ENCODE measurements at regions of chr3 and their contacts with region 1.

Region 1: DNA sequence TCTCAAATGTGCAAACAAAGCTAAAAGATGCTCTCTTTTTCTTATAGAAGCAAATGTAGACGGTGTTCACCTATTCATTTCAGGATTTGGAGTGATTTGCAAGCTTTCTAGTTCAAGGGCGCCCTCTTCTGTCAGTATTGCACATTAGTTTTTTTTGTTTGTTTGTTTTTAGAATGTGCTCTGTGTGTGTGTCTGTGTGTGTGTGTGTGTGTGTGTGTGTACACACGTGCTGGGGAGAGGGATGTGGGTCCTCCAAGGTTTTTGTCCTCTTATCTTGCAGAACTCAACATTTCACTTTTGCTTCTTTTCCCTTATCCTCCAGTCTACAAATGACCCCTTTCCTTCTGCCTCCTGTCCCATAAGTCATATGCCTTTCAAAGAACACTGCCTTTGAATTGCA is 23.5 kb downstream of the DNAH1 start:
- DNase-seq: peak; percentile 34
- ATAC-seq: peak; percentile 83
- H3K4me3 ChIP-seq: no peak overlapping the region
- H3K27ac ChIP-seq: no peak overlapping the region
- H3K4me1 ChIP-seq: peaks cover 7% of the 10 kb centered on the region; the same call in 1 of the 2 replicates
- H3K27me3 ChIP-seq: no peaks in the 10 kb centered on the region
- CTCF ChIP-seq: peak; percentile 60 to 77 (median 62)
- EP300 ChIP-seq: no peak
- POLR2A ChIP-seq: no peak
- RAD21 ChIP-seq: peak; percentile 99

Region 2: DNA sequence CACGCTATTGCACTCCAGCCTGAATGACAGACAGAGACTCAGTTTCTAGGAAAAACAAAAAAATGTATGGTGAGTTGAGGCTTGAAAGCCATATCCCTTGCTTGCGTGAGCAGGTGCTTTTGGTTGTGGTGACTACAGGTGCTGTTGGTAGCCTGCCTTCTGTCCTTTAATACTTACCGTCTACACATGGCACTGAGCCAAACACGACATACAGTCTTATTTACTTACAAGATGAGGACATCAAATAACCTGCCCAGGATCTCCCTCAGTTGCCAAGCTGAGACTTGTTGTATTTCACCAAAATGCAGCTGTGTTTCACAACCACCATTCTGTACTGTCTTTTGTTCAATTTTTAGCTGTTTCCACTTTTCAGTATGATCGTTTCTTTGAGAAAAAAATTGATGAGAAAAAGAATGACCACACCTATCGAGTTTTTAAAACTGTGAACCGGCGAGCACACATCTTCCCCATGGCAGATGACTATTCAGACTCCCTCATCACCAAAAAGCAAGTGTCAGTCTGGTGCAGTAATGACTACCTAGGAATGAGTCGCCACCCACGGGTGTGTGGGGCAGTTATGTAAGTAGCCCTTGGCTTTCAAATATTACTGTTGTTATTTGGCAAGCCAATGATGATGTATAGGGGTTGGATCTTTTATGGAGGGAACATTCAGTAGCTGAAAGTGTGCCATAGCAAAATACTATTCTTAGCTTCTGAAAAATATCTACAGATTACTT is 135.1 kb before region 1 on chr3:
- CTCF ChIA-PET with region 1: interaction called, 10 read pairs
- POLR2A ChIA-PET with region 1: no interaction called
- RAD21 ChIA-PET with region 1: no interaction called
- SMC1A ChIA-PET with region 1: interaction called, 4 read pairs
- in situ Hi-C with region 1: no loop called
- intact Hi-C with region 1: no loop called
- DNase-seq: no peak
- ATAC-seq: peak; percentile 16; the same call in 1 of the 3 replicates
- H3K4me3 ChIP-seq: peak overlapping the region; percentile 3; the same call in 1 of the 2 replicates
- H3K27ac ChIP-seq: no peak overlapping the region
- H3K4me1 ChIP-seq: peaks cover 21% of the 10 kb centered on the region; the same call in 1 of the 2 replicates
- H3K27me3 ChIP-seq: no peaks in the 10 kb centered on the region
- CTCF ChIP-seq: no peak
- EP300 ChIP-seq: no peak
- POLR2A ChIP-seq: no peak
- RAD21 ChIP-seq: no peak

Region 3: DNA sequence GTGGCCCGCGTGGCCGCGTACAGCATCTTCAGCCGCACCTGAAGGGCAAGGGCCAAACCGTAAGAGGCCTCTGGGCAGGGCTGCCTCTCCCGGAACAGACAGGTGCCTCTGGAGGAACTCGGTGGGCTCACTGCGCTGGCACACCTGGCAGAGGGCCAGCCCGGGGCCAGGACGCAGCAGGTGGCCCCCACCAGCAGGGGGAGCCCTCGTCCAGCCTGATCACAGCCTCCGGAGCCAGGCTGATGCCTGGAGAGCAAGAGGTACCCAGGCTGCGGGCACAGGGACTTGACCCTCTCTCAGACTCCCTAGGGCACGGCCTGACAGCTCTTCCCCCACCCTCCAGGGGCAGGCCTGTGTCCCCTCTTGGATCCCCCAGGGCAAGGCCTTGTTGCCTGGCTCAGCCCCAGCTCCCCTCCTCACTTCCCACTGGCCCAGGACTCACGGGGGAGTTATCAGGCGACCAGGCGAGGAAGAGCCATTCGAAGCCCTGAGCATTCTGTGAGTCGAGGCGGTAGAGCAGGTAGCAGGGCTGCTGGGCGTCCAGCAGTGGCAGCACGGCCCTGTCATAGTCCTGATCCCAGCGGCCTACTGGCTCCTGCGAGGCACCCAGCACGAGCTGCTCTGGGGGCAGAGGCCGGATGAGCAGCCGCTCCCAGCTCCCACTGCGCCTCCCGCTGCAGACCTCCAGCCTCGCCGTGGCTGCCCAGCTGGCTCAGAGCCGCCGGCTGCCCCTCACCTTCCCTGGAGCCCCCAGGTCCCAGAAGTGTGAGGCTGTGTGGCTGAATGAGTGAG is 107.9 kb before region 1 on chr3:
- CTCF ChIA-PET with region 1: interaction called, 91 read pairs
- POLR2A ChIA-PET with region 1: interaction called, 7 read pairs
- RAD21 ChIA-PET with region 1: interaction called, 30 read pairs
- SMC1A ChIA-PET with region 1: interaction called, 36 read pairs
- in situ Hi-C with region 1: loop called (anchors 5 kb)
- intact Hi-C with region 1: no loop called
- DNase-seq: no peak
- ATAC-seq: peak; percentile 92
- H3K4me3 ChIP-seq: no peak overlapping the region
- H3K27ac ChIP-seq: no peak overlapping the region
- H3K4me1 ChIP-seq: peaks cover 9% of the 10 kb centered on the region
- H3K27me3 ChIP-seq: no peaks in the 10 kb centered on the region
- CTCF ChIP-seq: peak; percentile 92 to 98 (median 95)
- EP300 ChIP-seq: no peak
- POLR2A ChIP-seq: no peak
- RAD21 ChIP-seq: peak; percentile 78

Region 4: DNA sequence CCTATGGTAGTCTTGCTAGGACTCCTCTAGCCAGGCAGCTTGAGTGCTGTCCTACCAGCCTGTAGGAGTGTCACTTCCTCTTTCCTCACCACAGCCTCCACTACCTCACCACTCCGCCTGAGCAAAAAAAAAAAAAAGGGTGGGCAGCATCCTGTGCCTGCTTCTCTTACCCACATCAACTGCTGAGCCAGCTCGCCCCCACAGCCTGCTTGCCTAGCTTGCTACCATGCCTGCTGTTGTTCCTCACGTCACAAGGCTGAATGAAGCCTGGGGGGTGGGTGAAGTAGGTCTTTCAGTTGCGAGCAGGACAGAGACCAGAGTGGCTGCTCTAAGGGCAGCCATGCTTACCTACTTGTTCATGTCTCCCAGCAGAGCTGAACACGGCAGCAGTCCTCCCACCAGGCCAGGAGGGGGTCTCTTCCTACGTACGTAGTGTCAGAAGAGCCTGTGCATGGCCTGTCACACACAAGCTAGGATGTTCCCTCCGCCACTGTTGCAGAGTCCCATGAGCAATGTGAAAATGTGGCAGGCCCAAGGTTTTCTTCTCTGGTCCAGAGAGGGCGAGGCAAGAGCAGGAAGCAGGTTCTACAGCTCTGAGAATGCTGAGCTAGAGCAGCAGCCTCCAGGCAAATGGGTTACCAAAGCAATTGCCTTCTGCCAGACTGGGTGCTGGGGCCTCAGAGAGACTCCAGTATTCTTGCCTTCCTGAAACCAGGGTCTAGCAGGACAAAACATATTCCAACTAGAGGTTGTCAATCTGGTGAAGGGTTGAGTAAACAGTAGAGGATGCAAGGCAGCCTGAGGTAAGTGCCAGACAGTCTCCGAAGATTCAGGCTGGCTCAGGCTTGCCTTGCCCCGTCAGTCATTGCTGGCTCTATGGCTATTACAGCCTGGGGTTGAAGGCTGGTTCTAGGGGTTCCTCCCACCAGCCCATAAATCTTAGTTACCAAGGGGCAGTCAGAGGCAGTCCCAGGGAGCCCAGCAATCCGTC is 86.0 kb before region 1 on chr3:
- CTCF ChIA-PET with region 1: interaction called, 9 read pairs
- POLR2A ChIA-PET with region 1: interaction called, 3 read pairs
- RAD21 ChIA-PET with region 1: no interaction called
- SMC1A ChIA-PET with region 1: interaction called, 11 read pairs
- in situ Hi-C with region 1: no loop called
- intact Hi-C with region 1: no loop called
- DNase-seq: peak; percentile 85
- ATAC-seq: peak; percentile 98
- H3K4me3 ChIP-seq: no peak overlapping the region
- H3K27ac ChIP-seq: peak overlapping the region; percentile 88
- H3K4me1 ChIP-seq: peaks cover 18% of the 10 kb centered on the region
- H3K27me3 ChIP-seq: no peaks in the 10 kb centered on the region
- CTCF ChIP-seq: no peak
- EP300 ChIP-seq: peak; percentile 66 to 86; a peak in 3 of 4 replicates
- POLR2A ChIP-seq: peak; percentile 75
- RAD21 ChIP-seq: 0 out of 2 replicates have a peak, but pooled peaks have one; percentile 2

Region 5: GRCh38 chr3:52299879-52300611 is 39.6 kb before region 1 on chr3:
- CTCF ChIA-PET with region 1: interaction called, 451 read pairs
- POLR2A ChIA-PET with region 1: interaction called, 4 read pairs
- RAD21 ChIA-PET with region 1: interaction called, 52 read pairs
- SMC1A ChIA-PET with region 1: interaction called, 62 read pairs
- in situ Hi-C with region 1: no loop called
- intact Hi-C with region 1: no loop called
- DNase-seq: no peak
- ATAC-seq: peak; percentile 80
- H3K4me3 ChIP-seq: no peak overlapping the region
- H3K27ac ChIP-seq: 0 out of 2 replicates have a peak overlapping the region, but pooled peaks have one; percentile 24
- H3K4me1 ChIP-seq: peaks cover 12% of the 10 kb centered on the region
- H3K27me3 ChIP-seq: no peaks in the 10 kb centered on the region
- CTCF ChIP-seq: peak in 2 of 3 experiments; percentile 10 to 29; a peak in 3 of 6 replicates
- EP300 ChIP-seq: no peak
- POLR2A ChIP-seq: peak; percentile 65
- RAD21 ChIP-seq: no peak

Region 6: GRCh38 chr3:52328536-52329080 is 11.0 kb before region 1 on chr3:
- CTCF ChIA-PET with region 1: interaction called, 14 read pairs
- POLR2A ChIA-PET with region 1: interaction called, 3 read pairs
- RAD21 ChIA-PET with region 1: interaction called, 4 read pairs
- SMC1A ChIA-PET with region 1: interaction called, 26 read pairs
- in situ Hi-C with region 1: no loop called
- intact Hi-C with region 1: no loop called
- DNase-seq: no peak
- ATAC-seq: no peak
- H3K4me3 ChIP-seq: no peak overlapping the region
- H3K27ac ChIP-seq: no peak overlapping the region
- H3K4me1 ChIP-seq: no peaks in the 10 kb centered on the region
- H3K27me3 ChIP-seq: no peaks in the 10 kb centered on the region
- CTCF ChIP-seq: no peak
- EP300 ChIP-seq: no peak
- POLR2A ChIP-seq: 0 out of 2 replicates have a peak, but pooled peaks have one; percentile 41
- RAD21 ChIP-seq: no peak

Region 7: DNA sequence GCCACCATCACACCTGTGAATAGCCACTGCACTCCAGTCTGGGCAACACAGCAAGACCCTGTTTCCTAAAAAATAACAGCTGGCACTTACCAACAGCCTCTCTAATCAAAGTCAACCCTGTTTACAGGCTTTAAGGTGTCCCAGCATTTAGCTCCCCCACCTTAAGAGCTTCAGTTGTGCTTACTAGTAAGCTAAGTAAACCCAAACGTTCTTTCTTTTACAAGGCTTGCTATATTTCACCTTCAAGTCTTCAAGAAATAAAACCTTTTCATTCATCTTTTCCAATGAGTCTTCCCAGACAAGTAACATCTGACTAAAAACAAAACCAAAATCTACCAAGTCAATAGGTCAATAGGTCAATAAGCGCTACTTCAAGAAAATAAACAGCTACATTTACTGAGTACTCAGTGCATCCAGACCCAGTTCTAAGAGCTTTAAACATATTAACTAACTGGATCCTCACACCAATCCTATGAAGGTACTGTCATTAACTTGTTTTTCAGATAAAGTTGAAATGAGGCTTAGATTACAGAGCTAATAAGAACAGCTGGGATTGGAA is 283.7 kb after region 1 on chr3:
- CTCF ChIA-PET with region 1: no interaction called
- POLR2A ChIA-PET with region 1: no interaction called
- RAD21 ChIA-PET with region 1: no interaction called
- SMC1A ChIA-PET with region 1: no interaction called
- in situ Hi-C with region 1: no loop called
- intact Hi-C with region 1: no loop called
- DNase-seq: no peak
- ATAC-seq: no peak
- H3K4me3 ChIP-seq: no peak overlapping the region
- H3K27ac ChIP-seq: no peak overlapping the region
- H3K4me1 ChIP-seq: no peaks in the 10 kb centered on the region
- H3K27me3 ChIP-seq: no peaks in the 10 kb centered on the region
- CTCF ChIP-seq: no peak
- EP300 ChIP-seq: no peak
- POLR2A ChIP-seq: no peak
- RAD21 ChIP-seq: no peak

Measured in GM12878 (cell line).